ENCODE measurements at regions of chr11 and their contacts with region 1.

Region 1: DNA sequence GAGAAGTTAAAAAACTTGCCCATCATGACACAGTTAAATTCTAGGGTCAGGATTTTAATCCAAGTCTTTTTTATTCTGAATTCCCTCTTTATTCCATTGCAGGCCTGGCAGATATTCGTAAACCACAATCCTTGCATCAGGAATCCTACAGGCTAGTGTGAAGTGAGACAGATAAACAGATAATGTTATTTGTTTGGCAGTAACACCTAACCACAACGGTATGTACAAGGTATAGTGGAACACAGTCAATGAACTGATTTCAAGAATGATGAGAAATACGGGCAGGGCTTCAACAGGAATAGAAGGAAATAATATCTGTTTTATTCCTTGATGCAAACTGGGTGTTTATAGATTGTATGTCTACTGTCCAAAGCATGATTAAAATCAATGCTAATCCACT is 32.0 kb upstream of the NARS2 start:
- H3K4me3 ChIP-seq: no peak overlapping the region
- H3K27ac ChIP-seq: no peak overlapping the region
- H3K4me1 ChIP-seq: no peaks in the 10 kb centered on the region
- CTCF ChIP-seq: no peak

Region 2: DNA sequence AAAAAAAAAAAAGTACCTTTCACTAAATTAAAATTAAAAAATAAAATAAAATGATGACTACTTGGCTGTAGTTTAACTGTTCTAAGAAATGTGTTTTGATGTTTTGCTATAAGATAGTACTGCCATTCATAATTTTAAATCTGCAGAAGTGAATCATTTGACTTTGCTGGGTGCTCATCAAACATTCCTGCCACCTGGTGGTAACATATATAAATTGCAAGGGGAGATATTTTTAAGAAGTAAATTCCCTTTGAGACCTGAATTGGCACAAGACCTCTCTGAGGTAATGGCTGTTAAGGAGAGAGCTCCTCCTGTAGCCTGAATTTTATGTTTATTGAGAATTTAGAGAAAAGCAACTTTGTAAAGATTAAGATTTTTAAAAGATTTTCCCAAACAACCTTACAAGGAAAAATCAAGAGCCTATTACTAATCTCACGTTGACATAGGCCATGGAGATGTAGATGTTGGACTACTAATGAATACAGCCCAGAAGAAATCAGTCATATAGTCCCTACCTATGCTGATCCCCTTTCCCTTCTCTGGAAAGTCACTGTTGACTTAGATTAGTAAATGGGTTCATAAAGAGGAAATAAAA is 20.1 kb before region 1 on chr11:
- CTCF ChIA-PET with region 1: interaction called, 10 read pairs
- POLR2A ChIA-PET with region 1: no interaction called
- H3K4me3 ChIP-seq: no peak overlapping the region
- H3K27ac ChIP-seq: no peak overlapping the region
- H3K4me1 ChIP-seq: no peaks in the 10 kb centered on the region
- CTCF ChIP-seq: no peak

Measured in HEK293 (cell line).